ENCODE measurements at regions of chr11 and their contacts with region 1.

Region 1: GRCh38 chr11:68271781-68272608 is at the start of gene C11orf24:
- DNase-seq: peak; percentile 92
- H3K4me3 Mint-ChIP-seq: peak within 1 kb of the TSS; percentile 88
- H3K27ac Mint-ChIP-seq: peak within 1 kb of the TSS; percentile 95
- H3K4me1 Mint-ChIP-seq: peaks cover 17% of the 10 kb centered on the region
- H3K27me3 Mint-ChIP-seq: no peaks in the 10 kb centered on the region
- CTCF ChIP-seq: no peak
- total RNA-seq, gene C11orf24: 58.3 and 69.2 TPM in 2 replicates

Region 2: DNA sequence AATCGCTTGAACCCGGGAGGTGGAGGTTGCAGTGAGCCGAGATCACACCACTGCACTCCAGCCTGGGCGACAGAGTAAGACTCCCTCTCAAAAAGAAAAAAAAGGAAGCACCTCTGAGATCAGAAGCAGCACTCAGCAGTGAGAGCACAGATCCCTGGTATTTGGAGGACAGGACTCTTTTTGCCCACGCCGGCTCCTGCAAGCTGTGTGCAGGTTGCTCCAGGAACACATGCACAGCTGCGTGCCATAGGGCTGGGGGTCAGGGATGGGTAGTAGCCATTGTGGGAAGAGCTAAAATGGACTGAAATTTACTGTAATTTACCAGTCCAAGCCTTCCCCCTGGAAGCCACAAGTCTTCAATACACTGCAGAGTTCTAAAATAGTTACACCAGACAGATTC is 36.3 kb before region 1 on chr11:
- CTCF ChIA-PET with region 1: no interaction called
- POLR2A ChIA-PET with region 1: no interaction called
- intact Hi-C with region 1: no loop called
- DNase-seq: no peak
- H3K4me3 Mint-ChIP-seq: no peak overlapping the region
- H3K27ac Mint-ChIP-seq: no peak overlapping the region
- H3K4me1 Mint-ChIP-seq: no peaks in the 10 kb centered on the region
- H3K27me3 Mint-ChIP-seq: peaks cover 18% of the 10 kb centered on the region
- CTCF ChIP-seq: no peak

Region 3: GRCh38 chr11:68257475-68258362 is 14.3 kb before region 1 on chr11:
- CTCF ChIA-PET with region 1: interaction called, 28 read pairs
- POLR2A ChIA-PET with region 1: interaction called, 34 read pairs
- intact Hi-C with region 1: no loop called
- DNase-seq: peak; percentile 93
- H3K4me3 Mint-ChIP-seq: no peak overlapping the region
- H3K27ac Mint-ChIP-seq: no peak overlapping the region
- H3K4me1 Mint-ChIP-seq: no peaks in the 10 kb centered on the region
- H3K27me3 Mint-ChIP-seq: no peaks in the 10 kb centered on the region
- CTCF ChIP-seq: peak; percentile 88

Region 4: GRCh38 chr11:68282141-68282970 is 10.4 kb after region 1 on chr11:
- CTCF ChIA-PET with region 1: interaction called, 3 read pairs
- POLR2A ChIA-PET with region 1: interaction called, 28 read pairs
- intact Hi-C with region 1: no loop called
- DNase-seq: peak; percentile 39
- H3K4me3 Mint-ChIP-seq: peak overlapping the region; percentile 8
- H3K27ac Mint-ChIP-seq: peak overlapping the region; percentile 83
- H3K4me1 Mint-ChIP-seq: peaks cover 22% of the 10 kb centered on the region
- H3K27me3 Mint-ChIP-seq: no peaks in the 10 kb centered on the region
- CTCF ChIP-seq: no peak

Region 5: GRCh38 chr11:68312117-68312779 is 40.3 kb after region 1 on chr11 and contains the start of gene LRP5:
- CTCF ChIA-PET with region 1: interaction called, 3 read pairs
- POLR2A ChIA-PET with region 1: interaction called, 33 read pairs
- intact Hi-C with region 1: no loop called
- DNase-seq: no peak
- H3K4me3 Mint-ChIP-seq: peak within 1 kb of the TSS; percentile 87
- H3K27ac Mint-ChIP-seq: peak within 1 kb of the TSS; percentile 88
- H3K4me1 Mint-ChIP-seq: peaks cover 40% of the 10 kb centered on the region
- H3K27me3 Mint-ChIP-seq: no peaks in the 10 kb centered on the region
- CTCF ChIP-seq: no peak
- total RNA-seq, gene LRP5: 31.6 and 32.8 TPM in 2 replicates

Region 6: GRCh38 chr11:68338051-68338780 is 66.2 kb after region 1 on chr11:
- CTCF ChIA-PET with region 1: no interaction called
- POLR2A ChIA-PET with region 1: interaction called, 11 read pairs
- intact Hi-C with region 1: no loop called
- DNase-seq: peak; percentile 63
- H3K4me3 Mint-ChIP-seq: peak overlapping the region; percentile 28
- H3K27ac Mint-ChIP-seq: peak overlapping the region; percentile 95
- H3K4me1 Mint-ChIP-seq: peaks cover 44% of the 10 kb centered on the region
- H3K27me3 Mint-ChIP-seq: no peaks in the 10 kb centered on the region
- CTCF ChIP-seq: no peak

Region 7: DNA sequence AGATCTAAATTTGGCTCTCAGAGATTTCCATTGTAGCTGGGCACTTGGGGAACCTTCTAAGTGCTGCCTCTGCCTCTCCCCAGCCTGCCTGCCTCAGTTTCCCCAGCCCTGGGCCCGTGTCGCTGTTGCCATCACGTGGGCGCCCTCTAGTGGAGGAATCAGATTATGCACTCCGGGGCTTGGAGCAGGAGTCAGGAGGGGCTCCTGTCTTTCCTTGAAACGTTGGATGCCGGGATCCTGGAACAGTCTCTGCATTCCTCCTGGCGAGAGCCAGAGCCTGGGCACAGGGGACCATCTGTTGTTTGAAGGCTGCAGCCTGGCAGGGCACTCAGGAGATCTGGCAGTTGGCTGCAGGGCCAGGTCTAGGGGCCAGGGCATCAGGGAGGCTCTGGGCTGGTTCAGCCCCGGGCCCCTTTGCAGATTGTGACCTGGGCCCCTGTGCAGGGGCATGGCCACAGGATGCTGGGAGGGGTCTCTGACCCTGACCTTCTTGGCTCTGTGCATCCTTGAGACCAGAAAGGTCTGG is 112.0 kb after region 1 on chr11:
- CTCF ChIA-PET with region 1: interaction called, 5 read pairs
- POLR2A ChIA-PET with region 1: no interaction called
- intact Hi-C with region 1: loop called (anchors 5 kb)
- DNase-seq: peak; percentile 54
- H3K4me3 Mint-ChIP-seq: no peak overlapping the region
- H3K27ac Mint-ChIP-seq: no peak overlapping the region
- H3K4me1 Mint-ChIP-seq: no peaks in the 10 kb centered on the region
- H3K27me3 Mint-ChIP-seq: no peaks in the 10 kb centered on the region
- CTCF ChIP-seq: peak; percentile 93

Region 8: DNA sequence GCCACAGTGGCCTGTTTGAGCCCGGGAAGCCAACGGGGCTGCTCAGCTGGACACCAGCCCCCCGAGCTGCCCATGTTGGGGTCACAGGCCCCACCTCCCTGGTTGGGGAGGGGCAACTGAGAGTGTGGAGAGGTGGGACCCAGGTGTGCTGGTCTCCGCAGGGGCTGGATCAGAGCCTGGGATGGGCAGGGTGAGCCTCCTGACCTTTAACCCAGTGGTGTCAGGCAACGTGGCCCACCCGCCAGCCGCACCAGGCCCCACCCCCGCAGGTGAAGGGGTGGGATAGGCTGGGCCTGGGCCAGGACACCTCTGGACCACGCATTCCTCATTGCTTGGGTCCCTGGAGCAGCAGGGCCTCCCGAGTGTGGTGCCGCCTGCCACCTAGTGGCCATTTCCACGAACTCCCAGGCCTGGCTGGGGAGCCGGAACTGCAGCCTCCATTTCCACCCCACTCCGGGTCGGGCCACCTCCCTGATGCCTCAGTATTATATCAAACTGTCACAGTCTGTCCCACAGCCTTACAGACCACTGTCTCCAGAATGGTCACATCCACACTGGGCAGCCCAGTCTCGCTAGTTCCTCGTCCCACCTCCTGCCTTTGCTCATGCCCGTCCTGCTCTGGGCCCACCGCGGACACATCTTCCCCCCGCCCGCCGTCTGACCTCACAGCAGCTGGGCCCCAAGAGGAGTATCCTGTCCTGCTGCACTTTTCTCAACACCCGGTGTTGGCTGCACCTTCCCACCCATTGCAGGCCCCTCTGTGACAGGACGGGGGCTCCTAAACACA is 175.2 kb after region 1 on chr11:
- CTCF ChIA-PET with region 1: no interaction called
- POLR2A ChIA-PET with region 1: no interaction called
- intact Hi-C with region 1: loop called (anchors 1 kb)
- DNase-seq: peak; percentile 67
- H3K4me3 Mint-ChIP-seq: no peak overlapping the region
- H3K27ac Mint-ChIP-seq: no peak overlapping the region
- H3K4me1 Mint-ChIP-seq: no peaks in the 10 kb centered on the region
- H3K27me3 Mint-ChIP-seq: no peaks in the 10 kb centered on the region
- CTCF ChIP-seq: peak; percentile 95

Measured in MCF 10A (cell line).